CD4-positive, alpha-beta T cell (primary cell): ENCODE measurements at regions of chr13 and their contacts with region 1.

Region 1: DNA sequence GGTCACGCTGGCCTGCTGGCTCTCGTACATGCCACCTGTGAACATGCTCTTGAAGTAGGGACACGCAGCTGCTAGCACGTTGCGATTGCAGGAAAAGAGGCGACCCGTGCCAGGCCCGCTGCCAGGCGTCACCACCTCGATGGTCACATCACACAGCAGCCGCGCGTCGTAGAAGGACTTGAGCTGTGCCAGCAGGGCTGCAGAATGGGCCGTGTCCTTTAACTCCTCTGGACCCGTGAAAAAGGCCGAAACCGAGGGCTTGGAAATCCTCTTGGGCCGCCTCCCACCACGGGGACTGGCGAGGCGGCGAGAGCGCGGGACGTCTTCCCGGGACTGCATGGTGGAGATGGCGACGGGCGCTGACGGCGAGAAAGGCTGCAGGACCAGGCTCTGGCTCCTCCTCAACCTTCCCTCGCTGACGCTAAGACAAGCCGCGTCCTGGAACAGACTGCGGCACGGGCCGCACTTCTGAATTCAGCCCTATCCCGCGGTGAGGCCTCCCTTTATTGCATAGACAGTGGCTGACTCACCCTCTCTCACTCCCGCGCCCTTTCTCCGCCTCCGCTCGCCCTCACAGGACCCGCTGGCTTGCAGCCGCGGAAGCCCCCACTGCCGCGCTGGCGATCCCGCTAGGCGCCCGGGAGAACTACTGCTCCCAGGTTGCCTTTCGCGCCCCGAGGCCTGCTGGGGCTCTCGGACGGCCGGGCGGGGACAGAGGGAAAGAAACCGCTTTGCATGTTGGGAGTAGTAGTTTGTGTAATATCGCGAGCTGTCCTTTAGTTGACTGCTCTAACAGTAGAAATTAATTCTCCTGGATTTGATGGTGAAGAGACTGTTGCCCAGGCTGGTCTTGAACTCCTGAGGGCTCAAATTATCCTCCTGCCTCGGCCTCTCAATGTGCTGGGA is at the start of gene KBTBD7:
- DNase-seq: peak; percentile 79 to 93 (median 87)
- ATAC-seq: peak; percentile 96
- H3K4me3 ChIP-seq: peak within 1 kb of the TSS; percentile 74
- H3K4me3 Mint-ChIP-seq: peak within 1 kb of the TSS; percentile 94
- H3K27ac ChIP-seq: peak within 1 kb of the TSS; percentile 8 to 66
- H3K27ac Mint-ChIP-seq: peak within 1 kb of the TSS; percentile 87
- H3K4me1 ChIP-seq: peaks cover 17% of the 10 kb centered on the region
- H3K4me1 Mint-ChIP-seq: peaks cover 44% of the 10 kb centered on the region
- H3K27me3 ChIP-seq: no peaks in the 10 kb centered on the region
- H3K27me3 Mint-ChIP-seq: no peaks in the 10 kb centered on the region
- CTCF ChIP-seq: no peak
- total RNA-seq, gene KBTBD7: 2.7 to 3.1 TPM

Region 2: DNA sequence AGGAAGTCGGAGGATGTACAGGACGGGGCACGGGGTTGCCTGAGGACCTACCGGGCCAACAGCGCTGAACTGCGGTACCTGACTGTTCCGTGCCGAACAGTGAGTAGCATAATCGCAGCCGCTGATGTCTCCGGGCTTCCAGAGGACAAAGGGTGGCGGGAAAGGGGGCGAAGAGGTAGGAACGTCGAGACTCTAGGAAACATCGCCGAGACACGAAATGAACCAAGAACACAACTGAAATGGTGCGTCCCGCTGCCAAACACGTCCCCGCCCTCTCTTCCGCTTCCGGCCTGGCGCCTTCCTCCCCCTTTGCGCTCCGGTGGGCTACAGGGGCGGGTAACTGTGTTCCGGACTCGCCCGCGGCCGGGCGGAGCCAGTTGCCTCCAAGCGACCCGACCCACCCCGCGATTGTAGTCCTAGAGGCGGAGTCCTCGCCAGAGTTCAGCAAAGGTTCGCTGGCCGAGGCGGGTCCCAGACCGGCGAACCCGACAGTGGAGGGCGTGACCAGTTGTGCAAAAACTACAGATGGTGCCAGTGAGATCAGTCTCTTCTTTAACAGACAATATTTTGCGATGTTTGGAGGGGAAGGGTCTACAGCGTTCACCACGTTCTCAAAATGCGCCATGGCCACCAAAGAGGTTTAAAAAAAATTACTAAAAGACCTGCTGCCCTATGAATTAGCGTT is 423.1 kb before region 1 on chr13 and contains the start of gene MRPS31:
- CTCF ChIA-PET with region 1: interaction called, 3 read pairs
- POLR2A ChIA-PET with region 1: no interaction called
- intact Hi-C with region 1: loop called in 1 of 2 experiments (anchors 5 kb)
- DNase-seq: peak; percentile 87 to 96 (median 94)
- ATAC-seq: peak; percentile 92
- H3K4me3 ChIP-seq: peak within 1 kb of the TSS; percentile 90
- H3K4me3 Mint-ChIP-seq: peak within 1 kb of the TSS; percentile 98
- H3K27ac ChIP-seq: peak within 1 kb of the TSS; percentile 75 to 81
- H3K27ac Mint-ChIP-seq: peak within 1 kb of the TSS; percentile 95
- H3K4me1 ChIP-seq: peaks cover 26% of the 10 kb centered on the region
- H3K4me1 Mint-ChIP-seq: peaks cover 29% of the 10 kb centered on the region
- H3K27me3 ChIP-seq: no peaks in the 10 kb centered on the region
- H3K27me3 Mint-ChIP-seq: no peaks in the 10 kb centered on the region
- CTCF ChIP-seq: peak; percentile 16
- total RNA-seq, gene MRPS31: 8.3 to 9.5 TPM

Region 3: DNA sequence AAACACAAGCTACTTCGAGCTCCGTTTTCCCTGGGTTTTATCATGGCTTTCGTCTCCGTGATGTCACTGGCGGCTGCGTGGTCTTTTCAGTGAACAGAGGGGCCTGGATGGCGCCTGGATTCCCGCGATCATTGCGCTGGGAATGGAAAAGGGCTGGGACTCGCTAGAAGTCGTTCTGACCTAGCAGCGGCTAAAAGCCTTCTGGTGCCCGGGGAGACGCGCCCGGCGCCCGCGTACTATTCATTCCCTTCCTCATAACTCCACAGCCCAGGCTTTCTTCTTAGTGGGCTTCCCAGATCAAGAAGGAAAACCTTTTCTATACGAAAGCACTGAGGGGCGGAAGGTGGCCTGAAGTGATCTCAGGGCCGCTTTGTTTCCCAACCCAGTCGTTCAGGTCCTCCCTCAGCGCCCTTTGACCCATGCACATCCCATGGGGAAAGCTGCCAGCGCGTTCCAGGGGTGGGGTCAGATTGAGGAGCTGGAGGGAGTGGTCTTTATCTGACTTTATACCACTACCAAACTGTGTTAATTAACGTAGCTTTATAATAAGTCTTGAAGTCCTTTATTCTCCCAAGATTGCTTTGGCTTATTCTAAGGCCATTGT is 271.6 kb before region 1 on chr13:
- CTCF ChIA-PET with region 1: no interaction called
- POLR2A ChIA-PET with region 1: no interaction called
- intact Hi-C with region 1: loop called in 1 of 2 experiments (anchors 10 kb)
- DNase-seq: peak in 2 of 14 experiments; percentile 9 to 37
- ATAC-seq: no peak
- H3K4me3 ChIP-seq: no peak overlapping the region
- H3K4me3 Mint-ChIP-seq: peak overlapping the region; percentile 80
- H3K27ac ChIP-seq: no peak overlapping the region
- H3K27ac Mint-ChIP-seq: peak overlapping the region; percentile 42
- H3K4me1 ChIP-seq: peaks cover 15% of the 10 kb centered on the region
- H3K4me1 Mint-ChIP-seq: peaks cover 25% of the 10 kb centered on the region
- H3K27me3 ChIP-seq: no peaks in the 10 kb centered on the region
- H3K27me3 Mint-ChIP-seq: no peaks in the 10 kb centered on the region
- CTCF ChIP-seq: no peak

Region 4: GRCh38 chr13:41075034-41075433 is 119.1 kb before region 1 on chr13:
- CTCF ChIA-PET with region 1: no interaction called
- POLR2A ChIA-PET with region 1: no interaction called
- intact Hi-C with region 1: loop called in 1 of 2 experiments (anchors 10 kb)
- DNase-seq: peak in 13 of 14 experiments; percentile 3 to 75 (median 20)
- ATAC-seq: peak; percentile 49
- H3K4me3 ChIP-seq: no peak overlapping the region
- H3K4me3 Mint-ChIP-seq: no peak overlapping the region
- H3K27ac ChIP-seq: no peak overlapping the region
- H3K27ac Mint-ChIP-seq: no peak overlapping the region
- H3K4me1 ChIP-seq: no peaks in the 10 kb centered on the region
- H3K4me1 Mint-ChIP-seq: no peaks in the 10 kb centered on the region
- H3K27me3 ChIP-seq: no peaks in the 10 kb centered on the region
- H3K27me3 Mint-ChIP-seq: no peaks in the 10 kb centered on the region
- CTCF ChIP-seq: peak; percentile 53

Region 5: GRCh38 chr13:41132512-41133152 is 61.5 kb before region 1 on chr13 and contains the start of gene KBTBD6:
- CTCF ChIA-PET with region 1: interaction called, 3 read pairs
- POLR2A ChIA-PET with region 1: interaction called, 3 read pairs
- intact Hi-C with region 1: loop called (anchors 1 kb)
- DNase-seq: peak; percentile 81 to 96 (median 88)
- ATAC-seq: peak; percentile 96
- H3K4me3 ChIP-seq: peak within 1 kb of the TSS; percentile 91
- H3K4me3 Mint-ChIP-seq: peak within 1 kb of the TSS; percentile 96
- H3K27ac ChIP-seq: peak within 1 kb of the TSS; percentile 50 to 68
- H3K27ac Mint-ChIP-seq: peak within 1 kb of the TSS; percentile 86
- H3K4me1 ChIP-seq: peaks cover 37% of the 10 kb centered on the region
- H3K4me1 Mint-ChIP-seq: peaks cover 54% of the 10 kb centered on the region
- H3K27me3 ChIP-seq: no peaks in the 10 kb centered on the region
- H3K27me3 Mint-ChIP-seq: no peaks in the 10 kb centered on the region
- CTCF ChIP-seq: no peak
- total RNA-seq, gene KBTBD6: 6.8 to 7.2 TPM

Region 6: DNA sequence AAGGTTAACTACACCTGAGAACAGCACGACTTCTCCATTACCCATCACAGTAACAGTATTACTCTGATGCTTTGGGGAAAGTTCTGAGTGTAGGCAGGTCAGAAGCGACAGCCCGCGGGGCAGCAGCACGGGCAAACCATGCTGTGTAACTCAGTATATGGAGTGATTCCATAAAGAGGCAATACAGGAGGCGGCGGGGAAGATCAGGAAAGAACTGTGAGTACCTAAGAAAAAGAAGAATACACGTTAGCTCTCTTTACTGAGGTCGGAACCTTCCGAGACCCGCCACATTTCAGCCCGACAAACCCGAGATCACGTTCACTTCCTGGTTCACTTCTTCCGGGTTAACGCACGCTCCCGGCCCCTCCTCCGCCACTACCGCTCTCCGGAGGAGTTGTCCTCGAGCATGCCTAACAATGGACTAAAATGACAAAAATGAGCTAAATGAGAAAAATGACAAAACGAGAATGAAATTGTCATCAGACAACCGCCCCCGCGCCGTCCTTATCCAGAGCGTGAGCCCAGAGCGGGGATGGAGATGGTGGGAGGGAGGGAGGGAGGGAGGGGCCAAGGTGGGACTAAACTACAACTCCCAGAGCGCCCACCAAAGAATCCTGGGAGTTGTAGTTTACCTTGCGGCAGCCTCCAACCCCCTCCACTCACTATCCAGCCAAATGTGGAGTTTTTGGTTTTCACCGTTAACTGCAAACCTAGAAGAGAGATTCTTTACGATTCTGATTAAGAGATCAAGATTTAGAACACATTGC is 69.3 kb after region 1 on chr13 and contains the start of gene MTRF1:
- CTCF ChIA-PET with region 1: interaction called, 3 read pairs
- POLR2A ChIA-PET with region 1: no interaction called
- intact Hi-C with region 1: loop called (anchors 1 to 2 kb)
- DNase-seq: peak; percentile 62 to 91 (median 76)
- ATAC-seq: peak; percentile 92
- H3K4me3 ChIP-seq: peak within 1 kb of the TSS; percentile 68
- H3K4me3 Mint-ChIP-seq: peak within 1 kb of the TSS; percentile 99
- H3K27ac ChIP-seq: peak within 1 kb of the TSS; percentile 77 to 78
- H3K27ac Mint-ChIP-seq: peak within 1 kb of the TSS; percentile 96
- H3K4me1 ChIP-seq: peaks cover 13% of the 10 kb centered on the region
- H3K4me1 Mint-ChIP-seq: peaks cover 35% of the 10 kb centered on the region
- H3K27me3 ChIP-seq: no peaks in the 10 kb centered on the region
- H3K27me3 Mint-ChIP-seq: no peaks in the 10 kb centered on the region
- CTCF ChIP-seq: no peak
- total RNA-seq, gene MTRF1: 15.7 to 17.8 TPM

Region 7: DNA sequence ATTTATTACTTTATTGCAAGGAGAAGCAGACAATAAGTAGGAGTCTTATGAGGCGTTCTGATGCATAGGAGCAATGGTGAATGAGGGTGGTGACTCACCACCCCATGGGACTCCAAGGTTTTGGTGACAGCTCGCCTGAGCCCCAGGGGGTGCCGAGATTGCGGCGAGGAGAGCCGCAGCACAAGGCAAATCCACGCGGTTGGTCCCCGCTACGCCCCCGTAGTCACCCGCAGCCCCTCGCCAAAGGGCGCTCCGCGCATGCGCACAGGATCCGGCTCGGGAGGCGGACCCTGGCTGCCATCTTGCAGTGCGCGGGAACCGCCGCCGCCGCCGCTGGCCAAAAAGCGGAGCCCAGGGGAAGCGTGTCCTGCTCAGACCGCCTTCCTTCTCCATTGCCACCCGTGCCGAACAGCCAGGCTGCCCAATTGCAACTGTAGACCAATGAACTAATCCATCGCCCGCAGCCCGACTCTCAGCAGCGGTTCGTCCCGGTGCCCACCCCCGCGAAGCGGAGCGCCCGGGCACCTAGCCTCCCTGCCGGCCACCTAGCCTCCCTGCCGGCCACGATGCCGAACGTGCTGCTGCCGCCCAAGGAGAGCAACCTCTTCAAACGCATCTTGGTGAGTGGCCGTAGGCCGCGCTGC is 116.9 kb after region 1 on chr13 and contains the start of gene NAA16:
- CTCF ChIA-PET with region 1: no interaction called
- POLR2A ChIA-PET with region 1: interaction called, 3 read pairs
- intact Hi-C with region 1: loop called in 1 of 2 experiments (anchors 10 kb)
- DNase-seq: peak; percentile 89 to 97 (median 94)
- ATAC-seq: peak; percentile 85
- H3K4me3 ChIP-seq: peak within 1 kb of the TSS; percentile 90
- H3K4me3 Mint-ChIP-seq: peak within 1 kb of the TSS; percentile 97
- H3K27ac ChIP-seq: peak within 1 kb of the TSS; percentile 55 to 85
- H3K27ac Mint-ChIP-seq: peak within 1 kb of the TSS; percentile 98
- H3K4me1 ChIP-seq: peaks cover 35% of the 10 kb centered on the region
- H3K4me1 Mint-ChIP-seq: peaks cover 56% of the 10 kb centered on the region
- H3K27me3 ChIP-seq: no peaks in the 10 kb centered on the region
- H3K27me3 Mint-ChIP-seq: no peaks in the 10 kb centered on the region
- CTCF ChIP-seq: no peak
- total RNA-seq, gene NAA16: 76.9 to 80.5 TPM